ENCODE measurements at regions of chr1 and their contacts with region 1.

Region 1: GRCh38 chr1:153946622-153947241 is at the start of gene DENND4B:
- DNase-seq: peak; percentile 75 to 90
- H3K4me3 ChIP-seq: peak within 1 kb of the TSS; percentile 87 to 93
- H3K27ac ChIP-seq: peak within 1 kb of the TSS; percentile 94 to 98
- H3K4me1 ChIP-seq: peaks cover 0 to 31% (median 15%) of the 10 kb centered on the region in 4 donors
- H3K27me3 ChIP-seq: no peaks in the 10 kb centered on the region
- CTCF ChIP-seq: peak; percentile 85 to 98

Region 2: GRCh38 chr1:153670859-153671627 is 275.7 kb before region 1 on chr1 and contains the start of gene ILF2:
- intact Hi-C with region 1: loop called (anchors 10 kb)
- DNase-seq: peak; percentile 95 to 99
- H3K4me3 ChIP-seq: peak within 1 kb of the TSS; percentile 73 to 78
- H3K27ac ChIP-seq: peak within 1 kb of the TSS; percentile 84 to 87
- H3K4me1 ChIP-seq: peaks cover 0 to 23% (median 17%) of the 10 kb centered on the region in 4 donors
- H3K27me3 ChIP-seq: no peaks in the 10 kb centered on the region
- CTCF ChIP-seq: peak in 1 of 2 experiments; percentile 37

Region 3: DNA sequence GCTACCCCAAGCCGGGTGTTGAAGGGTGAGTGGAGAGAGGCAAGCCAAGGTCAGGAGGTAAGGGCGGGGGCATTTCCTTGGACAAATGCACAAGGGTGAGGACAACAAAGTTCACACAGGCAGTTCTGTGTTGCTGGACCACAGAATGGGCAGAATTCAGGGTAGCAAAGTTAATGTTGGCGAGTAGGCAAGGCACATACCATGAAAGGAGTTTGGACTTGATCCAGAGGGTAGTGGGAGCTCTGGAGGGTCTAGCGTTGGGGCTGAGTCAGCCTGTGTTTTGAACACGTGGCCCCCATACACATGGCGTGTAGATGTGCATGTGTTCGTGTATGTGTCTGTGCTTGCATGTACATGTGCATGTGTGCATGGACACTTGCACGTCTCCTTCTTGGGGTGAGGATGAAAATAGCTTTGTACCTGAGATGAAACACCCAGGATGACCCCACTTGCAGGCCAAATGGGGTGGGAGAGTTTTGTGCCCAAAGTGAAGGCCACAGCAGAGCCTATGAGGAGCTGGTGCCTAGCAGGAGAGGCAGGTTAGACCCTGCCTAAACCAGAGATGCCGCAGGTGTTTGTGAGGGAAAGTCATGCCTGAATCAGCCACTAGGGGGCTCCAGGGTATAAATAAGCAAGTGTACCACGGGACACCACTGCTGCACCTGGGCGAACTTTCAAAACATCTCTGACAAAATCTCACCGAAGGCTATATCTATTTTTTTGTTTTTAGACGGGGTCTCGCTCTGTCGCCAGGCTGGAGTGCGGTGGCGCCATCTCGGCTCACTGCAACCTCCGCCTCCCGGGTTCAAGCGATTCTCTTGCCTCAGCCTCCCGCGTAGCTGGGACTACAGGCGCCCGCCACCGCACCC is 149.7 kb before region 1 on chr1:
- intact Hi-C with region 1: loop called (anchors 2 kb)
- DNase-seq: peak; percentile 87 to 90
- H3K4me3 ChIP-seq: no peak overlapping the region
- H3K27ac ChIP-seq: no peak overlapping the region
- H3K4me1 ChIP-seq: no peaks in the 10 kb centered on the region
- H3K27me3 ChIP-seq: no peaks in the 10 kb centered on the region
- CTCF ChIP-seq: peak; percentile 91 to 96

Region 4: DNA sequence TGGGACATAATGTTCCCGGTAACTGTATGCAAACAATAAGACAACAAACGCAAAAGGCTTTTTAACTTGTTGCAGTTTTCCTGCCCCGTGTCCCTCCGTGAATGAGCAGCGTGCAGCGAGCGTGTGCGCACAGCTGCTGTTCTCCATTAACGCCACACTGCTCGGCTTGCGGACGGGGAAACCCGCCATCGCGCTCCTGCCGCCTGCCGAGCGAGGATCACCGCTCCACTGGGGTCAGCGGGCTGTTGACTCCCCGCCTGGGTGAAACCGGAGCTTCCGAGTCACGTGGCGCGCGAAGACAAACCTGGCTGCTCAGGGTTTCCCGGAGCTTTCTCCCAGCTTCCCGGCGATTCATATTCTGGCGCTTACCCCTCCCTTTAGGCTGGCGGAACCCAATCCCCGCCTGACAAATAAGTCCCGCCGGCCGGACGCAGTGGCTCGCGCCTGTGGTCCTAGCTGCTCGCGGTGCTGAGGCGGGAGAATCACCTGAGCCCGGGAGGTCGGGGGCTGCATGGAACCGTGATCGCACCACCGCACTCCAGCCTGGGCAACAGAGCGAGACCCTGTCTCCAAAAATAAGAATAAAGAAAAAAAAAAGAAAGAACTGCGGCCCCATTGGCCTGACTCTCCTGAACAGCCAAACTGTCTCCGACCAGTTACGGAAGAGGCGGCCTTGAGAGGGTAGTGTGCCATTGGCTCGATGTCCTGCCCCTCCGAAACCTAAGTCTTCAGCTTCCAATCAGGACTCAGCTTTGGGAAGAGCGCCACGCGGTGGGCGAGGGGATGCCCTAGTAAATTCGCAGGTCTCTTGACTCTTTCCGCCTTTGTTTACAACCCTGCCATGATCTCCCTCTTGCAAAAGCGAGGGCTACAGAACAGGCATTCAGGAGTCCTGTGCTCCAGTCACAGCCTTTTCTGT is 20.6 kb after region 1 on chr1 and contains the start of gene CREB3L4:
- intact Hi-C with region 1: no loop called
- DNase-seq: peak; percentile 94 to 96
- H3K4me3 ChIP-seq: peak within 1 kb of the TSS; percentile 62
- H3K27ac ChIP-seq: peak within 1 kb of the TSS; percentile 78 to 88
- H3K4me1 ChIP-seq: peaks cover 0 to 50% (median 31%) of the 10 kb centered on the region in 4 donors
- H3K27me3 ChIP-seq: no peaks in the 10 kb centered on the region
- CTCF ChIP-seq: peak; percentile 17 to 37